ENCODE measurements at regions of chr18 and their contacts with region 1.

Region 1: GRCh38 chr18:26656944-26657536 is 108.7 kb upstream of the KCTD1 start:
- DNase-seq: peak; percentile 53
- H3K4me3 ChIP-seq: peak overlapping the region; percentile 38 to 63 (median 50)
- H3K27ac ChIP-seq: no peak overlapping the region
- H3K4me1 ChIP-seq: peaks cover 8% of the 10 kb centered on the region
- H3K27me3 ChIP-seq: peaks cover 51 to 72% of the 10 kb centered on the region in 2 experiments
- CTCF ChIP-seq: peak in 1 of 2 donors; percentile 50
- POLR2A ChIP-seq: no peak

Region 2: DNA sequence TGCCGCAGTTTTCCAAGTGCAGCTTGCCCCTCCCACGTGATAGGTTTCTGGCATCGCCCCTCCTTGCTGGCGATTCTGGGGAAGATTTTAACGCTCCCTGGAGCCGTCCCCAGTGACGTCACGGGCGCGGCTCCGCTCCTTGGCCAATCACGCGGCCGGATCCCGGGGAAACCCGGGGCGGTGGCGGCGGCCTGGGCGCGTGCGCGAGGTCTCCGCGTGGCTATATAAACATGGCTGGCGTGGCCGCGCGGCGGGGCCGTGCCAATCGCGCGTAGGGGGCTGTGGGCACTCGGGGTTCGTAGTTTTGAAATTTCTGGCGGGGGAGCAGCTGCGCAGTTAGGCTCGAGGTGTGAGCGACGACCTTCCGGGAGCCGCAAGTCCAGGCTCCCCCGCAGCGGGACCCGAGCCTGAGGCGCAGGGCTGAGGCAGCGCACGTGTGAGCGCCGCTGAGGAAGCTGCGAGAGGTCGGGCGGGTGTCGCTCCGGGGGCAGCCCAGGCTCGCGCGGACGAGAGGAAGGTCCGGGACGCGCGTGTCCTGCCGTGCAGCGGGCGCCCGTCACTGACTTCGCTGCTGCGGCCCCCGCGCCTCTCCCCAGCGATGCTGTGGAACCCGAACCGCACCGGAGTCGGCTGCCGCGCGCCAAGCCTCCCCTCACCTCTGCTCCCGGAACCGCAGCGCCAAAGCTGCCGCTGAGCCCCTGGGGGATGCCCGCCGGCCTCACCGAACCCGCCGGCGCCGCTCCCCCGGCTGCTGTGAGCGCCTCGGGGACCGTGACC is 430.6 kb before region 1 on chr18 and contains the start of gene TAF4B:
- CTCF ChIA-PET with region 1: no interaction called
- POLR2A ChIA-PET with region 1: no interaction called
- dilution Hi-C with region 1: no loop called
- intact Hi-C with region 1: loop called (anchors 5 kb)
- DNase-seq: peak; percentile 93
- H3K4me3 ChIP-seq: peak within 1 kb of the TSS; percentile 70 to 85 (median 75)
- H3K27ac ChIP-seq: peak within 1 kb of the TSS; percentile 28
- H3K4me1 ChIP-seq: peaks cover 11% of the 10 kb centered on the region
- H3K27me3 ChIP-seq: peaks cover 6 to 13% of the 10 kb centered on the region in 2 experiments
- CTCF ChIP-seq: no peak
- POLR2A ChIP-seq: no peak
- total RNA-seq, gene TAF4B: 1.2 and 2.0 TPM in 2 replicates

Region 3: DNA sequence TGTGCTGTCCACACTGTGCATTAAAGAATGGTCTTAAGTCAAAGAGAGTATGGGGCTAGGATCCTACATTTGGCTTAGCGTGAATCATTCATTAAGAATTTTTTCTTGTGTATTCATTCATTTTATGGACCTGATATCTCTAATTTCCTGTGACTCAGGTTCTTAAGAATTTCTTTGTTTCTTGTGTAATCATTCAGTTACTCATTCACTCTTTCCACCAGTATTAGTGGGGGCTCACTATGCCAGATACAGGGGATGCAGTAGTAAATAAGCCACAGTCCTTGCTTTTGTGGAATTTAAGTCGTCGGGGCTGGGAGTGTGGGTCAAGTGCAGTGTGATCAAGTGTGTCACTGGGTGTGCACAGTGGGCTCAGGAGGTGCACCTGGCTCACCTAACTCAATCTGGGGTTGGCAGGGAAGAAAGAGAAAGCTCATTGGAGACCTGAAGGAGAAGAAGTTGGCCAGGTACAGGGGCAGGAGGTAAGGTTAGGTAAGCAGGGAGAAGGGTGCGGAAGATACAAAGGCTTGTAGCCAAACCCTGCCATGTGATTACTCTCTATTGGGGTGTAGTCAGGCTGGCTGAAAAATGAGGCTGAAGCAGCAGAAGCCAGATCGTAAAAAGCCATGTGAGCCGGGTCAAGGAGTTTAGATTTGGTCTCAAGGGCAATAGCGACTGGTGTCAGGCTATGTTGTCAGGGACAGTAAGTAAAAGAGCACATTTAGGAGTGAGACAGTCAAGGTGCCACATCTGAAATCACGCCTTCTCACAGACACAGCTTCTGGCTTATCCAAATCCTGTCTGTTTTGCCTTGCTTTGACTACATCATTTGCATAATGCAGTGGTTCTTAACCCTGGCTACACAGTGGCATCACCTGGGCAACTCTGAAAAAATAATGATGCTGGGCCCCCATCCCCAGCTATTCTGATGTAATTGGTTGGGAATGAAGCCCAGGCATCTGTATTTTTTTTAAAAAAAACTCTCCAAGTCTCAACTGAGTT is 175.8 kb before region 1 on chr18:
- CTCF ChIA-PET with region 1: no interaction called
- POLR2A ChIA-PET with region 1: no interaction called
- dilution Hi-C with region 1: no loop called
- intact Hi-C with region 1: loop called (anchors 2 kb)
- DNase-seq: peak; percentile 92
- H3K4me3 ChIP-seq: no peak overlapping the region
- H3K27ac ChIP-seq: peak overlapping the region; percentile 92
- H3K4me1 ChIP-seq: peaks cover 31% of the 10 kb centered on the region
- H3K27me3 ChIP-seq: no peaks in the 10 kb centered on the region
- CTCF ChIP-seq: no peak
- POLR2A ChIP-seq: no peak

Region 4: DNA sequence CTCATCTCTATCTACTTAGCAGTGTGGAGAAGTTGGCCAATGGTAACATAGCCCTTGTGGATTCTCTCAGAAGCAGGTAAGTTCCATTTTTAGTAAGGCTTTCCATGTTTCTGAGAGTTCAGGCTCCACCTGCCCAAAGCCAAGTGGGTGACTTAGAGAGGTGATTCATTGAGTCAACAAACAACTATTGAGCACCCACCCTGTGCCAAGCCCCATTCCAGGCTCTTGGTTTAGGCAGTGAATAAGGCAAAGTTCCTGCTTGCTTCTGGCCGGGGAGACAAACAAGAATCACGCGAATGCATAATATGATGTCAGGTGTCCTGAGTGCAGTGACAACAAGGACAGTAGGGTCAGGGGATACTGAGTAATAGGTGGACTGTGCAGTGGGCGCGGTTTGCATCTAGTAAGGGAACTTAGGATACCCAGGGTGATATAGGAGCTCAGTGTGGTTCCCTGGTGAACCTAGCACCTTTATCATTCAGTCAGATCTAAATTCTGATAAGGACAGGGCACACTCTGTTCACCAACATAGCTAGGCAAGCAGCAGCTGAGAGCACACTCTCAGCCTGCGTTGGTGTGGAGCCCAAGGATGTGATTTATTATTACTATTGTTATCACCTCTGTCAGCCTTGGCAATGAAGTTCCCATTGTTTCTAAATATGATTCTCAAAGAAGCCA is 77.0 kb before region 1 on chr18:
- CTCF ChIA-PET with region 1: no interaction called
- POLR2A ChIA-PET with region 1: no interaction called
- dilution Hi-C with region 1: no loop called
- intact Hi-C with region 1: no loop called
- DNase-seq: peak; percentile 3
- H3K4me3 ChIP-seq: no peak overlapping the region
- H3K27ac ChIP-seq: no peak overlapping the region
- H3K4me1 ChIP-seq: no peaks in the 10 kb centered on the region
- H3K27me3 ChIP-seq: peaks cover 10 to 17% of the 10 kb centered on the region in 2 experiments
- CTCF ChIP-seq: no peak
- POLR2A ChIP-seq: no peak

Region 5: DNA sequence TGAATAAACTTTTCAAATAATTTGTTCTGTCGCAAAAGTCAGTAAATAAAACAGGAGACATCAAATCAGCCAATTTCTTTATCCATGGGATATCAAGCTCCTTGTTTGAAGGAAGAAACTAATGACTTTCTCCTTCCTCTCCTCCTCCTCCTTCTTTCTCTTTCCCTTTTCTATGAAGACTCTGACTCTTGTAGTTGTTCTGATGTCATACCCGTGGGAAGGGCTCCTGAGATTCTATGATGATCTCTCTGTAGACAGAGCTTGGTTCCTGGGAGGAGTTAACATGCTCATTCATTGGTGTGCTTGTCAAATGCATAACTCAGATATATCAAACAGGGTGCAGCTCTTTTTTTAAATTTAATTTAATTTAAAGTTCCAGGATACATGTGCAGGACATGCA is 10.0 kb after region 1 on chr18:
- CTCF ChIA-PET with region 1: no interaction called
- POLR2A ChIA-PET with region 1: no interaction called
- dilution Hi-C with region 1: no loop called
- intact Hi-C with region 1: no loop called
- DNase-seq: no peak
- H3K4me3 ChIP-seq: no peak overlapping the region
- H3K27ac ChIP-seq: no peak overlapping the region
- H3K4me1 ChIP-seq: no peaks in the 10 kb centered on the region
- H3K27me3 ChIP-seq: peaks cover 4 to 7% of the 10 kb centered on the region in 2 experiments
- CTCF ChIP-seq: no peak
- POLR2A ChIP-seq: no peak